CD8-positive, alpha-beta T cell (primary cell): ENCODE measurements at regions of chr2 and their contacts with region 1.

Region 1: DNA sequence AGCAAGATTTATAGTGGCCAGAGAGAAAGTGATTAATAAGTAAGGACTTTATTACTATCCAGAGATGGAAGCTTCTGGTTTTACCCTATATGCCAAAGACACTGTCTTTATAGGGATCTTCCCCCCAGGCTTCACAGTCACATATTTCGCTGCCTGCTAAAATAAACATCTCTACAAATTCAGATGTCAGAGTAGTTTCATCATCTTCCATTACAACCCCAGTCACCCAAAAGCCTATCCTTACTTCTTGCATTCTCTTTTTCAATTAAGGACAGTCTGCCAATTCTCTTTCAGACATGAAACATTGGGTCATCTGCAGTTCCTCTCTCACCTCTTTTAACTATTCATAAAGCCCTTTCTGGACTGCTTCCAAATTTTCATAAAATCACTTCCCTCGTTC is 28.3 kb downstream of the CREB1 start:
- DNase-seq: no peak
- ATAC-seq: no peak
- H3K4me3 ChIP-seq: no peak overlapping the region
- H3K4me3 Mint-ChIP-seq: no peak overlapping the region
- H3K27ac ChIP-seq: no peak overlapping the region
- H3K27ac Mint-ChIP-seq: peak overlapping the region; percentile 8
- H3K4me1 ChIP-seq: no peaks in the 10 kb centered on the region
- H3K4me1 Mint-ChIP-seq: peaks cover 28% of the 10 kb centered on the region
- H3K27me3 ChIP-seq: no peaks in the 10 kb centered on the region
- H3K27me3 Mint-ChIP-seq: no peaks in the 10 kb centered on the region
- CTCF ChIP-seq: no peak

Region 2: GRCh38 chr2:207503234-207503633 is 54.9 kb before region 1 on chr2:
- CTCF ChIA-PET with region 1: no interaction called
- POLR2A ChIA-PET with region 1: no interaction called
- intact Hi-C with region 1: loop called in 1 of 2 experiments (anchors 2 kb)
- DNase-seq: no peak
- ATAC-seq: no peak
- H3K4me3 ChIP-seq: no peak overlapping the region
- H3K4me3 Mint-ChIP-seq: no peak overlapping the region
- H3K27ac ChIP-seq: no peak overlapping the region
- H3K27ac Mint-ChIP-seq: no peak overlapping the region
- H3K4me1 ChIP-seq: peaks cover 34% of the 10 kb centered on the region
- H3K4me1 Mint-ChIP-seq: peaks cover 35% of the 10 kb centered on the region
- H3K27me3 ChIP-seq: no peaks in the 10 kb centered on the region
- H3K27me3 Mint-ChIP-seq: no peaks in the 10 kb centered on the region
- CTCF ChIP-seq: no peak

Region 3: GRCh38 chr2:207546822-207547221 is 11.3 kb before region 1 on chr2:
- CTCF ChIA-PET with region 1: no interaction called
- POLR2A ChIA-PET with region 1: interaction called, 3 read pairs
- intact Hi-C with region 1: loop called in 1 of 2 experiments (anchors 2 kb)
- DNase-seq: no peak
- ATAC-seq: no peak
- H3K4me3 ChIP-seq: no peak overlapping the region
- H3K4me3 Mint-ChIP-seq: no peak overlapping the region
- H3K27ac ChIP-seq: no peak overlapping the region
- H3K27ac Mint-ChIP-seq: no peak overlapping the region
- H3K4me1 ChIP-seq: peaks cover 11% of the 10 kb centered on the region
- H3K4me1 Mint-ChIP-seq: peaks cover 75% of the 10 kb centered on the region
- H3K27me3 ChIP-seq: no peaks in the 10 kb centered on the region
- H3K27me3 Mint-ChIP-seq: no peaks in the 10 kb centered on the region
- CTCF ChIP-seq: no peak